ENCODE measurements at regions of chr10 and their contacts with region 1.

Region 1: DNA sequence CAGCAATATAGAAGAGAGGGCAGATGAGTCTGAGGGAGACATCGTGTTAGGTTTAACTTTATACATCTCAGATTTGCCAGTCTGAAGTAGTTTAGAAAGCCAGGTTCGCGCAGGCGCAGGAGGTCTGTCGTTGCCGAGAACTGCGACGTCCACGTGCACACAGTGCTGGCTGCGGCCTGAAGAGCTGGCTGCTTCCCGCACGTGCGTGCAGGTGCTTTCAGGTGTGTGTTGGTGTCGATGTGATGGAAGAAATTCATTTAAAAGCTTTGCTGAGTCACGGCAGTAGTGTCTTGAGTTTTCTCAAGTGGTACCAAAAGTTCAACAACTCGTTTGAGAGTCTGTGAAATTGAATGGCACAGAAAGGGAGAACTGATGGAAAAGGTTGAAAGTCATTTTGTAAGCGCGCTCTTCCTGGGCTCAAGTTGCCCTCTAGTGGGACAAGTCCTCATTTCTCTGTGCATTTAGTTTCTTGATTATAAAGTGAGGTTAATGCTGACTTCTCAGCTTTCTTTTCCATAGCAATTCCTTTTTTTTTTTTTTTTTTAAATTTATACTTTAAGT is 18.6 kb downstream of the WDR37 start:
- DNase-seq: no peak
- H3K4me3 ChIP-seq: no peak overlapping the region
- H3K27ac ChIP-seq: no peak overlapping the region
- H3K4me1 ChIP-seq: no peaks in the 10 kb centered on the region
- H3K27me3 ChIP-seq: no peaks in the 10 kb centered on the region
- CTCF ChIP-seq: no peak

Region 2: GRCh38 chr10:1094112-1095057 is 19.6 kb after region 1 on chr10:
- intact Hi-C with region 1: no loop called
- DNase-seq: no peak
- H3K4me3 ChIP-seq: no peak overlapping the region
- H3K27ac ChIP-seq: no peak overlapping the region
- H3K4me1 ChIP-seq: no peaks in the 10 kb centered on the region
- H3K27me3 ChIP-seq: no peaks in the 10 kb centered on the region
- CTCF ChIP-seq: no peak

Region 3: GRCh38 chr10:1938317-1938716 is 863.5 kb after region 1 on chr10:
- intact Hi-C with region 1: loop called (anchors 5 kb)
- DNase-seq: no peak
- H3K4me3 ChIP-seq: no peak overlapping the region
- H3K27ac ChIP-seq: no peak overlapping the region
- H3K4me1 ChIP-seq: no peaks in the 10 kb centered on the region
- H3K27me3 ChIP-seq: no peaks in the 10 kb centered on the region
- CTCF ChIP-seq: no peak

Measured in tibial artery (tissue), 4 donors.